ENCODE measurements at regions of chr6 and their contacts with region 1.

Region 1: GRCh38 chr6:166627033-166627874 is at the start of gene RPS6KA2:
- DNase-seq: peak; percentile 99
- H3K4me3 Mint-ChIP-seq: peak within 1 kb of the TSS; percentile 88
- H3K27ac Mint-ChIP-seq: peak within 1 kb of the TSS; percentile 66
- H3K4me1 Mint-ChIP-seq: peaks cover 24% of the 10 kb centered on the region
- H3K27me3 Mint-ChIP-seq: no peaks in the 10 kb centered on the region
- CTCF ChIP-seq: no peak
- total RNA-seq, gene RPS6KA2: 126 and 157 TPM in 2 replicates

Region 2: DNA sequence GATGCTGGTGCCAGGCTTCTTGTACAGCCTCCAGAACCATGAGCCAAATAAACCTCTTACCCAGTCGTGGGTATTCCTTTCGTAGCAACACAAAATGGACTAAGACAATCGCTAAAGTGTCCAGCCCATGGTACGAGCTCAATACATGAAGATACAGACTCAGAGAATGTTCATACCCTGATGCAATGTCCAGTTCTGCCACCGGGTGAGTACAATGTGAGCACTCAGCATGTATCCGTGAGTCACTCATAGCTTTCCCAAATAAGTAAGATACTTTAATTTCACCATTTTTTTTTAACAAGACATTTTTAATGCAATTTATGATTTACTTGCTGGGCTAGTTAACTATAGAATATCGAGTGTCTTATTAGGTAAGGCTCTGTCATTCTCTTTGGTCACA is 937.6 kb before region 1 on chr6:
- CTCF ChIA-PET with region 1: no interaction called
- POLR2A ChIA-PET with region 1: no interaction called
- intact Hi-C with region 1: no loop called
- DNase-seq: peak; percentile 11
- H3K4me3 Mint-ChIP-seq: no peak overlapping the region
- H3K27ac Mint-ChIP-seq: no peak overlapping the region
- H3K4me1 Mint-ChIP-seq: no peaks in the 10 kb centered on the region
- H3K27me3 Mint-ChIP-seq: no peaks in the 10 kb centered on the region
- CTCF ChIP-seq: no peak

Region 3: GRCh38 chr6:166540631-166541331 is 86.5 kb before region 1 on chr6:
- CTCF ChIA-PET with region 1: interaction called, 3 read pairs
- POLR2A ChIA-PET with region 1: interaction called, 12 read pairs
- intact Hi-C with region 1: no loop called
- DNase-seq: peak; percentile 56
- H3K4me3 Mint-ChIP-seq: no peak overlapping the region
- H3K27ac Mint-ChIP-seq: peak overlapping the region; percentile 16
- H3K4me1 Mint-ChIP-seq: peaks cover 28% of the 10 kb centered on the region
- H3K27me3 Mint-ChIP-seq: no peaks in the 10 kb centered on the region
- CTCF ChIP-seq: no peak

Region 4: GRCh38 chr6:166567107-166567506 is 60.1 kb before region 1 on chr6:
- CTCF ChIA-PET with region 1: interaction called, 5 read pairs
- POLR2A ChIA-PET with region 1: interaction called, 27 read pairs
- intact Hi-C with region 1: loop called (anchors 2 kb)
- DNase-seq: peak; percentile 97
- H3K4me3 Mint-ChIP-seq: peak overlapping the region; percentile 33
- H3K27ac Mint-ChIP-seq: peak overlapping the region; percentile 90
- H3K4me1 Mint-ChIP-seq: peaks cover 16% of the 10 kb centered on the region
- H3K27me3 Mint-ChIP-seq: no peaks in the 10 kb centered on the region
- CTCF ChIP-seq: no peak

Region 5: DNA sequence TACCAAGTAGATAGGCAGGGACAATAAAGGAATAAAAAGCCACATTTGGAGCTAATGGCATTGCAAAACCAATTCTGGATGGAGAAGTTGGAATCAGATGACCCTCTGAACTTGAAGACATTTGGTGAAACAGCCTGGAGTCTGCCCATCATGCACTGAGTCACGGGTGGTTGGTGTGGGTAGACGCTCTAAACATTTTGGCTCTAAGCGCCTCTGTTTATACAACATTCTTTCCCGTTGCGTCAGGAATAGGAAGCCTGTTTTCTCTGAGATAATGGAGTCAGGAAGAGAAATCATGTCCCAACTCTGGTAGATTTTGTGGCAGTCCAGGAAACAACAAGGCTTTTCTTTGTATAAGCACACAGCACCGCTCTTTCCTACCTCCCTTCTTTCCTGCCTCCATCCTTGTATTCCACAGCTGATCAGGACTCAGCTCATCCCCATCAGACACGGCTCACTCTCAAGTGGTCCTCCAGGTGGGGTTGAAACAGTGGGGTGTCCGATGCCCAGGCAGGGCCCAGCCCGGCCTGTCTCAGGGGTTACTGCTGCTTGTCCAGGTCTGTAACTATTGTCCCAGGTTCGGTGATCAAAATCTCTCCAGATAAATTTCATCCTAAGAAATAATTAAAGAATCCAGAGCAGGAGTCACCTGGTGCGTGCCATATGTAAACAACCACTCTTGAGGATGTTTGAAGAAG is 28.7 kb before region 1 on chr6:
- CTCF ChIA-PET with region 1: interaction called, 3 read pairs
- POLR2A ChIA-PET with region 1: interaction called, 89 read pairs
- intact Hi-C with region 1: loop called (anchors 2 kb)
- DNase-seq: peak; percentile 91
- H3K4me3 Mint-ChIP-seq: peak overlapping the region; percentile 43
- H3K27ac Mint-ChIP-seq: peak overlapping the region; percentile 93
- H3K4me1 Mint-ChIP-seq: peaks cover 60% of the 10 kb centered on the region
- H3K27me3 Mint-ChIP-seq: no peaks in the 10 kb centered on the region
- CTCF ChIP-seq: no peak

Region 6: DNA sequence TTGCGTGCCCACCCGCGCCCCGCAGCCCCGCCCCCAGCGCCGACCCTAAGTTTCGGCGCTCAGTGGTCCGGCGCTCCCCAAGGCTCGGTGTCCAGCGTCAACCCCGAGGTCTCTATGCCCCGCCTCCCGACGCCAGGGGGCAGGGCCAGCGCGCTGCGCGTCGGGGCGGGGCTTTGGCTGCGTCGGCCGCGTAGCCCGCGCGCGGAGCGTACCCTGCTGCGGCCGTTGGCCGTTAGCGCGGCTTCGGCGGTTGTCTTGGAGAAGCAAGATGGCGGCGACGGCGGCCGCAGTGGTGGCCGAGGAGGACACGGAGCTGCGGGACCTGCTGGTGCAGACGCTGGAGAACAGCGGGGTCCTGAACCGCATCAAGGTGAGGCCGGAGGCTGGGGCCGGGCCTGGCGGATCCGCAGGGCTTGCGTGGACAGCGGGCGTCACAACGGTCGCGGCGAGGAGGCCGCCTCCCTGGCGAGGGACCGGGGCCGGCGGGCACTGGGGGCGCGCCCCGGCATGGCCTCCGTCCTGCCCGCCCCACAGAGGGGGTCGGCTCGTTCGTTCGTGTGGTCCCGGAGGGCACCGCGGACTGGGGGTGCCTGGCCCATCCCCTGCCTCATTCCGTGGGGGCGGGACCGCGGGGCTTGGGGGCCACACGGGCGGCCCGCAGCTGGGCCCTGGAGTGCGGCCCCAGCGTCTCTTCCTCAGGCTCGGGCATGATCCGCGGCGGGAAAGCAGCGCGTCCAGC is 372.1 kb after region 1 on chr6 and contains the start of gene CEP43:
- CTCF ChIA-PET with region 1: no interaction called
- POLR2A ChIA-PET with region 1: interaction called, 10 read pairs
- intact Hi-C with region 1: no loop called
- DNase-seq: peak; percentile 93
- H3K4me3 Mint-ChIP-seq: peak within 1 kb of the TSS; percentile 77
- H3K27ac Mint-ChIP-seq: peak within 1 kb of the TSS; percentile 77
- H3K4me1 Mint-ChIP-seq: peaks cover 30% of the 10 kb centered on the region
- H3K27me3 Mint-ChIP-seq: no peaks in the 10 kb centered on the region
- CTCF ChIP-seq: no peak
- total RNA-seq, gene CEP43: 23.8 and 31.0 TPM in 2 replicates

Region 7: GRCh38 chr6:167711768-167712730 is 1084.8 kb after region 1 on chr6:
- CTCF ChIA-PET with region 1: no interaction called
- POLR2A ChIA-PET with region 1: no interaction called
- intact Hi-C with region 1: no loop called
- DNase-seq: no peak
- H3K4me3 Mint-ChIP-seq: no peak overlapping the region
- H3K27ac Mint-ChIP-seq: no peak overlapping the region
- H3K4me1 Mint-ChIP-seq: no peaks in the 10 kb centered on the region
- H3K27me3 Mint-ChIP-seq: peaks cover 100% of the 10 kb centered on the region
- CTCF ChIP-seq: no peak